CD4-positive, alpha-beta T cell (primary cell): ENCODE measurements at regions of chr5 and their contacts with region 1.

Region 1: GRCh38 chr5:80672140-80672736 is 17.5 kb upstream of the DHFR start:
- DNase-seq: peak; percentile 33 to 79 (median 56)
- ATAC-seq: peak; percentile 85
- H3K4me3 ChIP-seq: no peak overlapping the region
- H3K4me3 Mint-ChIP-seq: no peak overlapping the region
- H3K27ac ChIP-seq: no peak overlapping the region
- H3K27ac Mint-ChIP-seq: no peak overlapping the region
- H3K4me1 ChIP-seq: peaks cover 7% of the 10 kb centered on the region
- H3K4me1 Mint-ChIP-seq: peaks cover 9% of the 10 kb centered on the region
- H3K27me3 ChIP-seq: no peaks in the 10 kb centered on the region
- H3K27me3 Mint-ChIP-seq: no peaks in the 10 kb centered on the region
- CTCF ChIP-seq: peak; percentile 86

Region 2: GRCh38 chr5:80346055-80346454 is 326.2 kb before region 1 on chr5:
- CTCF ChIA-PET with region 1: no interaction called
- POLR2A ChIA-PET with region 1: no interaction called
- intact Hi-C with region 1: loop called (anchors 5 to 10 kb)
- DNase-seq: peak; percentile 5 to 61 (median 17)
- ATAC-seq: peak; percentile 41
- H3K4me3 ChIP-seq: no peak overlapping the region
- H3K4me3 Mint-ChIP-seq: no peak overlapping the region
- H3K27ac ChIP-seq: no peak overlapping the region
- H3K27ac Mint-ChIP-seq: no peak overlapping the region
- H3K4me1 ChIP-seq: no peaks in the 10 kb centered on the region
- H3K4me1 Mint-ChIP-seq: peaks cover 5% of the 10 kb centered on the region
- H3K27me3 ChIP-seq: peaks cover 0 to 8% of the 10 kb centered on the region in 2 experiments
- H3K27me3 Mint-ChIP-seq: peaks cover 5% of the 10 kb centered on the region
- CTCF ChIP-seq: peak; percentile 51

Region 3: DNA sequence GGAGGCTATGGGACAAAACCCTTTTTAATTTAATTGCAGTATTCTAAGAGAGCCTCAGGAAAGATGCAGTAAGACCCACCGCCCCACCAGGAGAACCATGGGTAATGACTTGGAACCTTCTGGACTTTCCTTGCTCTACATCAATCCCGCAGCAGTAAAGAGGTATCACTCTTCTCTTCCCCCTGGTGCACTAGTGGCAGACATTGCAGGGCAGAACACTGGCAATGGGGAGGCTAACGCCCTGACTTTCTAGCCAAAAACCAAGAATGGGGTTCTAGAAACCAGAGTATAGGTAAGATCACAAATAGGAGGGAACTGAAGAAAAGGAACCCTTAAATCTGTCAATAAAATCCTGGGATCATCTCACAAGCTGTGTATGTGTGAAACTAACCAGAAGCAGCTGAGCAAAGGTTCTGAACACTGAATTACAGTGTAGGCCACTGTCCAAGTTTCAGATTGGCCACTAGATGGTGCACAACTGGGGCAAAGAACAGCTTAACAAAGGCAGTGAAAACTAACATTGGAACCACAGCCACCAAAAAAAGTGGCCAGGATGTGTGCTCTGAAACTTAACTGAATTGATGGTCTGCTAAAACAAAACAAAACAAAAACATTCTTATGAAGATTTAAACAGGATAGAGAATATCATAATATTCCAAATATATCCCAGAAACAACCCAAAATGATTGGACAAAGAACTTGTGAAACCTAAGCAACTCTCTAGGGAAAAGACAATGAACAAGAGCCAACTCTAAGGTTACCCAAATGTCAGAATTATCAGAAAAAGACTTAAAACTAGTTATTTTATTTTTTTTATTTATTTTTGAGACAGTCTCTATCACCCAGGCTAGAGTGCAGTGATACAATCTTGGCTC is 191.0 kb before region 1 on chr5:
- CTCF ChIA-PET with region 1: no interaction called
- POLR2A ChIA-PET with region 1: no interaction called
- intact Hi-C with region 1: loop called (anchors 5 kb)
- DNase-seq: peak in 7 of 14 experiments; percentile 8 to 57 (median 32)
- ATAC-seq: peak; percentile 69
- H3K4me3 ChIP-seq: no peak overlapping the region
- H3K4me3 Mint-ChIP-seq: no peak overlapping the region
- H3K27ac ChIP-seq: no peak overlapping the region
- H3K27ac Mint-ChIP-seq: no peak overlapping the region
- H3K4me1 ChIP-seq: no peaks in the 10 kb centered on the region
- H3K4me1 Mint-ChIP-seq: peaks cover 6% of the 10 kb centered on the region
- H3K27me3 ChIP-seq: no peaks in the 10 kb centered on the region
- H3K27me3 Mint-ChIP-seq: no peaks in the 10 kb centered on the region
- CTCF ChIP-seq: peak; percentile 74